ENCODE measurements at regions of chr5 and their contacts with region 1.

Region 1: GRCh38 chr5:67209142-67209771 is 12.7 kb upstream of the CD180 start:
- DNase-seq: peak; percentile 75 to 76
- H3K4me3 ChIP-seq: no peak overlapping the region
- H3K27ac ChIP-seq: no peak overlapping the region
- H3K4me1 ChIP-seq: peaks cover 0 to 6% of the 10 kb centered on the region in 2 donors
- H3K27me3 ChIP-seq: no peaks in the 10 kb centered on the region
- CTCF ChIP-seq: peak; percentile 39 to 94 (median 72)
- POLR2A ChIP-seq: no peak

Region 2: DNA sequence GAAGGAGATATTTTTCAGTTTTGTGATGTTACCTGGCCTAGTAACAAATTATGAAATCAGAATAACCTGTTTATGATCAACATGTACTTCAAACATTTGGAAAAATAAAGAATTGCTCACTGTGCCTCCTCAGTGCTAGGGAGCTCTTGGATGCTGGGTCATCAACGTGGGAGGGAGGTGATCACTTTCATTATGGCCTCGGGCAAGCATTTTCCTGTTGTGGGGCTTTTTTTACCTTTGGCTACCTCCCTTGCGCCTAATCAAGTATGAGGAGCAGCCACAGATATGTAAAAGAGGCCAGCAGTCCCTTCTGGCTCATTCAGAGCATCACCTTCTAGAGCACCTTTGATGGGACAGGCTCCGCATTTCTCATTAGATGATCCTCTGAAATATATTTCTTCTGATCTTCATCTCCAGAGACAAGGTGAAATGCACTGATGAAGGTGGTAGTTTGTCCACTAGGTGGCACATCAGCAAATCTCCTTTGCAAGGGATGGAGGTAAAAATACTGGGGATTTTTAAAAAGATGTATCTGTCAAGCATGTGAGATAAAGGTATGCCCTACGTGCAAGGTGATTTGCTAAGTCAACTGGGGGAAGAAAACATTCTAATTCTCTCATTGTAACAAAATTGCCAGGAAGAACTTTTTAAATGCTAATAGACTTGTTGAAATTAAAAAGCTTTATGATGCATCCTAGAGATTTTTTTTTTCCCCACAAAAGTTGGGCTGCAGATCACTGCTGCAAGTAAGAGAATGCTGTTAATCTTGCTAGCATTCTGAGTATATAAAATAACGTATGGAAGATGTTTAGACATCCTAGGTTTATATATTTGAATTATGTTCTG is 394.9 kb before region 1 on chr5:
- intact Hi-C with region 1: loop called (anchors 10 kb)
- DNase-seq: peak; percentile 46 to 56
- H3K4me3 ChIP-seq: no peak overlapping the region
- H3K27ac ChIP-seq: no peak overlapping the region
- H3K4me1 ChIP-seq: no peaks in the 10 kb centered on the region
- H3K27me3 ChIP-seq: no peaks in the 10 kb centered on the region
- CTCF ChIP-seq: peak; percentile 61 to 74 (median 68)
- POLR2A ChIP-seq: no peak

Region 3: GRCh38 chr5:67161002-67161401 is 48.3 kb before region 1 on chr5:
- intact Hi-C with region 1: loop called (anchors 5 kb)
- DNase-seq: no peak
- H3K4me3 ChIP-seq: no peak overlapping the region
- H3K27ac ChIP-seq: no peak overlapping the region
- H3K4me1 ChIP-seq: peaks cover 1 to 3% of the 10 kb centered on the region in 2 donors
- H3K27me3 ChIP-seq: no peaks in the 10 kb centered on the region
- CTCF ChIP-seq: no peak
- POLR2A ChIP-seq: no peak